ENCODE measurements at regions of chr10 and their contacts with region 1.

Region 1: DNA sequence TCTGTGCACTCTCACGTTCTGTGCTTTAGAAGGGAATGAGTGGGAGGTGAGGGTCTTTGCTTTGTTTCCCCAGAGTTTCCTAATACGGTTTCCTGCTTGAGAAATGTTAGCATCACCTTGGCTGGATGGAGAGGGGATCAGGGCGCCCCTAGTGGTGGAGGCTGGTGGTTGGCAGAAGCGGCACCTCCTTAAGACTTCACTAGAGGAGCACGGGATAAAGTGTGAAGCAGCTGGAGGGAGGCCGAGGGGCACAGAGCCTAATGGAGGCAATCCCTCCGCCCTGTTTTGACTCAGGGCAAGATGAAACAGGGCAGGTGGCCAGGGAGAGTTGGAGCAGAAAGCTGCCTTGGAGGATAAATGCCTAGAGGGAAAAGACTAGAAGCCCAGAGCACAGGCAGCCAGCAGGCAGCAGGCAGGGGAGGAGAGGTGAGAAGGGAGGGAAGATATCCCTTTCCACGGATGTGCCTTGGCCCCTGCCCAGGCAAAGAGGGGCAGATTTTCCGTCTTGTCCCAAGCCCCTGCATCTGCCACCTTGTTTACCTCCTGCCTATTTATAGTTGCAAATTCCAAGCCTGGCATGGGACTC is 56.0 kb upstream of the BTRC start:
- DNase-seq: peak; percentile 45
- ATAC-seq: peak; percentile 88
- H3K4me3 ChIP-seq: no peak overlapping the region
- H3K27ac ChIP-seq: no peak overlapping the region
- H3K4me1 ChIP-seq: no peaks in the 10 kb centered on the region; the same call in 1 of the 2 replicates
- H3K27me3 ChIP-seq: peaks cover 2% of the 10 kb centered on the region
- CTCF ChIP-seq: peak; percentile 99

Region 2: GRCh38 chr10:101161494-101162299 is 136.3 kb before region 1 on chr10:
- CTCF ChIA-PET with region 1: no interaction called
- POLR2A ChIA-PET with region 1: no interaction called
- in situ Hi-C with region 1: loop called (anchors 25 kb)
- intact Hi-C with region 1: loop called (anchors 5 kb)
- DNase-seq: peak; percentile 72
- ATAC-seq: peak; percentile 96
- H3K4me3 ChIP-seq: peak overlapping the region; percentile 30 to 62
- H3K27ac ChIP-seq: no peak overlapping the region
- H3K4me1 ChIP-seq: peaks cover 12% of the 10 kb centered on the region; the same call in 1 of the 2 replicates
- H3K27me3 ChIP-seq: peaks cover 19% of the 10 kb centered on the region
- CTCF ChIP-seq: peak; percentile 98

Region 3: DNA sequence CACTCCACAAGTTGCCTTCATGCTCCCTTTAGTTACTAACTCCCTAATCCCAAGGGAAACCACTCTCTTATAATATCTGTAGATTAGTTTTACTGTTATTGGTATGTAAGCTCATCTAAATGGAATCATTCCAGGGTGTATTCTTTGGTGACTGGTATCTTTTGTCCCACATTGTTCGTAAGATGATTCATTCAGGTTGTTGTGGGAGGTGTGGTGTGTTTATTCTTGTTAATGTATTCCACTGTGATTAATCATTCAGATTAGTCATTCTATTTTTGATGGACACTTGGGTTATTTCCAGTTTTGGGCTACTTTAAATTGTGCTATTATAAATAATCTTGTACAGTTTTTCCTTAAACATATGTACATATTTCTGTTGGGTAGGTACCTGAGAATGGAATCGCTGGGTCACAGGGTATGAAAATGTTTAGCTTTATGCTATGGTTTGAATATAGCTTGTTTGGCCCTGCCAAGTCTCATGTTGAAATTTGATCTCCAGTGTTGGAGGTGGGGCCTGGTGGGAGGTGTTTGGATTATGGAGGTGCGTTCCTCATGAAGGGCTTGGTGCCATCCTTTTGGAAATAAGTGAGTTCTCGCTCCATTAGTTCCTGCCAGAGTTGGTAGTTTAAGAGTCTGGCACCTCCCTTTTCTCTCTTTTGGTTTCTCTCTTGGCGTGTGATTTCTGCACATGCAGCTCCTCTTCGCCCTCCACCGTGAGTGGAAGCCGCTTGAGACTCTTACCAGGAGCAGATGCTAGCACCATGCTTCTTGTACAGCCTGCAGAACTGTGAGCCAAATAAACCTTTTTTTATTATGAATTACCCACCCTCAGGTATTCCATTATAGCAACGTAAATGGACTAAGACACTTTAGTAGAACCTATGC is 69.8 kb after region 1 on chr10:
- CTCF ChIA-PET with region 1: no interaction called
- POLR2A ChIA-PET with region 1: no interaction called
- in situ Hi-C with region 1: no loop called
- intact Hi-C with region 1: no loop called
- DNase-seq: peak; percentile 67
- ATAC-seq: peak; percentile 92
- H3K4me3 ChIP-seq: no peak overlapping the region
- H3K27ac ChIP-seq: no peak overlapping the region
- H3K4me1 ChIP-seq: 0 out of 2 replicates have a peak, but pooled peaks cover 6% of the 10 kb centered on the region
- H3K27me3 ChIP-seq: no peaks in the 10 kb centered on the region
- CTCF ChIP-seq: no peak

Region 4: GRCh38 chr10:101441541-101442455 is 143.8 kb after region 1 on chr10:
- CTCF ChIA-PET with region 1: interaction called, 16 read pairs
- POLR2A ChIA-PET with region 1: no interaction called
- in situ Hi-C with region 1: no loop called
- intact Hi-C with region 1: loop called (anchors 2 kb)
- DNase-seq: peak; percentile 54
- ATAC-seq: peak; percentile 97
- H3K4me3 ChIP-seq: no peak overlapping the region
- H3K27ac ChIP-seq: no peak overlapping the region
- H3K4me1 ChIP-seq: peaks cover 6% of the 10 kb centered on the region; the same call in 1 of the 2 replicates
- H3K27me3 ChIP-seq: no peaks in the 10 kb centered on the region
- CTCF ChIP-seq: peak; percentile 88

Region 5: DNA sequence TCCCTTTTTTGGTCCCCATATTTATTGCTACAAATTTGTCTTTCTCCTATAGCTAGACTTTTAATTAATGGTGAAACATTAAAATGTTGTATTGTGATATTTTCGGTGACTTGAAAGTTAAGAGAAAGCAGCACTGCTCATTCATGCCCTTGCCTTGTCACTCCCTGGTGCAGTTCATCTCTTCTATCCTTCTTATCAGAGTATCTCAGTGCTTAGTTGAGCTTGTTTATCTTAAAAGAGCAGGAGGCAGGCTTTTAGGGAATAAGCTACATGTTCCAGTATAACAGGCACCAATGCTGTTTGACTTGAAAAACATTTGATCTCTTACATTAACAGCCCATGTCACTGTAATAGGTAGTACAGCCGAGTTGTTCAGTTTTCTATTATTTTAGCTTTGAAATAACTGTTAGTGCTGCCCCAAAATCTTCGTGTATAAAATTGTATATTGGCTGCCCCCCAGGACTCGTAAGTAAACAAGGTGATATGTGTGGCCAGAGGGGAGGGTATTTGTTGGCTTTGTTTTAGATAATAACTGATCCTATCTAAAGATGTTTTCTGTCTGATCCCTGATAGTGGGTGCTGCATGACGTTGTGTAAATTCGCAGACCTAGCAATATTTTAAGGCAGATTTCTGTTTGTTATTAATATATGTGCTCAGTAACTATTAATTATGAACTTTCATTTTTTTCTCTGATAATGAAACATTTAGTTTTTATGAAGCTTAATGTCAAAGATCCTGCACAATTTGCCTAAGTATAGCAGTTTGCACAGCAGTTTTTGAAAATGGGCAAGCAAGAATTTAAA is 152.5 kb after region 1 on chr10:
- CTCF ChIA-PET with region 1: interaction called, 10 read pairs
- POLR2A ChIA-PET with region 1: no interaction called
- in situ Hi-C with region 1: no loop called
- intact Hi-C with region 1: loop called (anchors 2 kb)
- DNase-seq: no peak
- ATAC-seq: no peak
- H3K4me3 ChIP-seq: no peak overlapping the region
- H3K27ac ChIP-seq: no peak overlapping the region
- H3K4me1 ChIP-seq: no peaks in the 10 kb centered on the region
- H3K27me3 ChIP-seq: no peaks in the 10 kb centered on the region
- CTCF ChIP-seq: no peak